Activated naive CD4-positive, alpha-beta T cell treated with anti-CD3 and anti-CD28 coated beads for 36 hours (primary cell): ENCODE measurements at regions of chr3 and their contacts with region 1.

Region 1: DNA sequence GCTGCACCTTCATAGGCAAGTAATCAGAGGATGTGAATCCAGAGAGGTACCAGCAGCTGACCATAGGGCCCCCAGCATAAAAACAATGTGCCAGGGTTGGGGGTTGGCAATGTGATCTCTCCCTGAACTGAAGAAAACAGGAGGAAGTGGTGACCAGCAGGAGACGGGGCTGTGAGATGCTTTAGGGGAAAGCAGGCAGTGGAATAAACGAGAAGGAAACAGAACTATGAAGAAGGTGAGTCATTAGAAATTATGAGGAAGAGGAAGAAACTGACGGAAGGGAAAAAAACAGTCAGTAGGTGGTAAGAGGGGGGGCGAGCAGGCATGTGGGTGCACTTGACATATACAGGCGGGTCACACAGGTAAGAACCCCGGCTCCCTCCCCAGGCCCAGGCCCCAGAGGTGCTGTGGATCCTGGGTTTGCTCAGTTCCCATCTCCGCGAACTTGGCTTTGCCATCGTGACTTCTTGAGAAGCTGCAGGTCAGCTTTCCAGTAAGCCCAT is 42.2 kb upstream of the B3GNT5 start:
- DNase-seq: peak; percentile 73
- H3K4me3 Mint-ChIP-seq: no peak overlapping the region
- H3K27ac Mint-ChIP-seq: peak overlapping the region; percentile 85
- H3K4me1 Mint-ChIP-seq: peaks cover 63% of the 10 kb centered on the region
- H3K27me3 Mint-ChIP-seq: no peaks in the 10 kb centered on the region

Region 2: DNA sequence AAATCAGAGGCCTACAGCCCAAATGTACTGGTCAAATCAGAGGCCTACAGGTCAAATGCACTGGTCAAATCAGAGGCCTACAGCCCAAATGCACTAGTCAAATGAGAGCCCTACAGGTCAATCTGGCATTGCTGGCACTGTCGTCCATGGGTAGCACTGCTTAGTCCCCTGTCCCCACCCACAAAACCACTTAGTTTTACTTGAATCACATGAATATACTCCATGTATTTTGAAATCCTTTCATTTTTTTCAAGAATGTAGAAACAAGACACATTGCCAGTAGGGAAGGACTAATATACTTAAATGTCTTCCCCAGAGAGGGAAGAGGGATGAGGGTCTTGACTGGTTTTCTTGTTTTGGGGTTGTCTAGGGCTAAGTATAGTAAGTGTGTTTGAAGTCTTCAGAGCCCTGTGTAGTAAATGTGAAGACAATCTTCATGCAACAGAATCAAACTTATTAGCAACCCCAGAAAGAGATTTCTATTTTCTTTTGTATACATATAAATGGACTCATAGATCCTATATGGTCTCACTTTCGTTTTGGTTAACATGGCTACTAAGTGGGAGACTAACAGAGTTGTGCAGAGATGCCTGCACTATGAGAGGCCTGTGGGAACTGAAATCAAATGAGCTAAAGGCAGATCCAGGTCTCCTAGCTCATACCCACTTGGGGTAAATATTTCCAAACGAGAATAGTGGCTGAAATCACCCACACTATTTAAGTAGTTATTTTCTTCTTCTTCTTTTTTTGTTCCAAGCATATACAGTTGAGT is 192.3 kb before region 1 on chr3:
- CTCF ChIA-PET with region 1: no interaction called
- intact Hi-C with region 1: no loop called
- DNase-seq: no peak
- H3K4me3 Mint-ChIP-seq: no peak overlapping the region
- H3K27ac Mint-ChIP-seq: no peak overlapping the region
- H3K4me1 Mint-ChIP-seq: no peaks in the 10 kb centered on the region
- H3K27me3 Mint-ChIP-seq: no peaks in the 10 kb centered on the region

Region 3: DNA sequence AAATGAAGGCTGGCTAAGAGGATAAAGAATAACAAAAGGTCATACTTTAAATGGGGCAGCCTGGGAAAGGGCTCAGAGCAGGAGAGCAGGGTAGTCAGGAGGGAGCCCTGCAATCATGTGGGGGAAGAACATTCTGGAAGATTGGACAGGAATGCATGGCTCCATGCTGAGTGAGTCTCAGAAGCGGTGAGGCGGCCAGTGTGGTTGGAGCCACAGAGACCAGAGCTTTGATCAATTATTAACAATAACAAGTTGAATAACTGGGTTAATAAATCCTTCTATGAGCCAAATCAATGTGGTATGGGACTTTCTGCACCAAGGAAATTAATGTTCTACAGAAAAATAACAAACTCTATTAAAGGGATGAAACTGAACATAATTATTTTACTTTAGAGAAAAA is 172.7 kb before region 1 on chr3:
- CTCF ChIA-PET with region 1: no interaction called
- intact Hi-C with region 1: no loop called
- DNase-seq: no peak
- H3K4me3 Mint-ChIP-seq: no peak overlapping the region
- H3K27ac Mint-ChIP-seq: no peak overlapping the region
- H3K4me1 Mint-ChIP-seq: no peaks in the 10 kb centered on the region
- H3K27me3 Mint-ChIP-seq: no peaks in the 10 kb centered on the region

Region 4: GRCh38 chr3:183158551-183159006 is 52.3 kb before region 1 on chr3:
- CTCF ChIA-PET with region 1: no interaction called
- intact Hi-C with region 1: loop called (anchors 2 kb)
- DNase-seq: peak; percentile 80
- H3K4me3 Mint-ChIP-seq: peak overlapping the region; percentile 19
- H3K27ac Mint-ChIP-seq: peak overlapping the region; percentile 74
- H3K4me1 Mint-ChIP-seq: peaks cover 41% of the 10 kb centered on the region
- H3K27me3 Mint-ChIP-seq: no peaks in the 10 kb centered on the region

Region 5: GRCh38 chr3:183224180-183224970 is 13.5 kb after region 1 on chr3:
- CTCF ChIA-PET with region 1: no interaction called
- intact Hi-C with region 1: loop called (anchors 1 kb)
- DNase-seq: peak; percentile 73
- H3K4me3 Mint-ChIP-seq: peak overlapping the region; percentile 44
- H3K27ac Mint-ChIP-seq: peak overlapping the region; percentile 2
- H3K4me1 Mint-ChIP-seq: peaks cover 31% of the 10 kb centered on the region
- H3K27me3 Mint-ChIP-seq: no peaks in the 10 kb centered on the region

Region 6: DNA sequence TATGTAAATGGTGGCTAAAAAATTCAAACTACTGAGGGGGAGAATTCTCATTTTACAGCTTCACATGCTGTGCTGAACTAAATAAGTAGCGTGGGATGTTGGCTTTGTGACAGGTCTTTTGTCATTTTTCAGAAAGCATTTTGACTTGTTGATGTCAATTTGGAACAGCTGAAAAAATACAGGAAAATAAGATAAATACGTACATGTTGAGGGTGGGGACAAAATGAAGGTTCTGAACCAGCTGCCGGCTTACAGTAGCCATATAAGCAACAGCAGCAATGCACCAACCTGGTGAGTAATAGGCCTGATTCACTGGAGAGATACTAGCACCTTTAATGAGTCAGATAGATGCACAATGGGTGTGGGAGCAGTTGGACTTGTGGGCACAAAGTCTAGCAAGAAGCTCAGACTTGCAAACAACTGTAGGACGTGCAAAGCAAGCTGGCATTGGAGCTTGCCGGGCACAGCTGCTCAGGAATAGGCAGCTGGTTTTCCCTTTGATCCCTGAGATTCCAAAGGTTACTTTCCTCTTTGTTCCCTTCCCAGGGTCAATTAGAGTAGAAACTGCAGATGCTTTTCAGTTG is 55.0 kb after region 1 on chr3:
- CTCF ChIA-PET with region 1: interaction called, 5 read pairs
- intact Hi-C with region 1: loop called (anchors 1 kb)
- DNase-seq: peak; percentile 80
- H3K4me3 Mint-ChIP-seq: no peak overlapping the region
- H3K27ac Mint-ChIP-seq: no peak overlapping the region
- H3K4me1 Mint-ChIP-seq: peaks cover 6% of the 10 kb centered on the region
- H3K27me3 Mint-ChIP-seq: no peaks in the 10 kb centered on the region

Region 7: DNA sequence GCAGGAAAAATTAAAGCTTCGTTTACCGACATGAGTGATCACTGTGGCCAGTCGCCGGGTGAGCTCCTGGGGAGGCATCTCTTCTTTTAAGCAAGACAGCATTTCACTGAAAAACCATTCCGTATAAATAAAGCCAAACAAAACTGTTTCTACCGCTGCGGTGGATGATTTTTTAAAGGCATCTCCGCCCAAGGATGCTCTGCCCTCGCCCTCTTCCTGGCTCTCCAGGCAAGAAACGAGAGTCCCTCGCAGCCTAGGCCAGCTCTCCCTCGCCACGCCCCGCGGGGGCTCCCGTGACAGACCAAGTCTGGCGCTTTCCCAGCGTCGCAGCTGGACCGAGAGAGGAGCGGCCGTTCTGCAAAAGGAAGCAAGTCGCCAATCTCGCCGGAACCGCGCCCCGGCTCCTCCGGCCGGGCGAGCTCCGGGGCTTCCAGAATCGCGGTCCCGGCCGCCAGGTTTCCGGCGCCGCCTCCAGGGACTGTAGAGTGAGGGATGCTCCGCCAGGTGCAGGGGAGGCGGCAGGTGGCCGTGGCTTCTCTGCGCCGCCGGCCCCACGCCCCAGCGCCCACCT is 217.1 kb after region 1 on chr3:
- CTCF ChIA-PET with region 1: no interaction called
- intact Hi-C with region 1: loop called (anchors 5 kb)
- DNase-seq: peak; percentile 40
- H3K4me3 Mint-ChIP-seq: peak overlapping the region; percentile 79
- H3K27ac Mint-ChIP-seq: no peak overlapping the region
- H3K4me1 Mint-ChIP-seq: peaks cover 27% of the 10 kb centered on the region
- H3K27me3 Mint-ChIP-seq: peaks cover 14% of the 10 kb centered on the region